ENCODE measurements at regions of chr1 and their contacts with region 1.

Region 1: DNA sequence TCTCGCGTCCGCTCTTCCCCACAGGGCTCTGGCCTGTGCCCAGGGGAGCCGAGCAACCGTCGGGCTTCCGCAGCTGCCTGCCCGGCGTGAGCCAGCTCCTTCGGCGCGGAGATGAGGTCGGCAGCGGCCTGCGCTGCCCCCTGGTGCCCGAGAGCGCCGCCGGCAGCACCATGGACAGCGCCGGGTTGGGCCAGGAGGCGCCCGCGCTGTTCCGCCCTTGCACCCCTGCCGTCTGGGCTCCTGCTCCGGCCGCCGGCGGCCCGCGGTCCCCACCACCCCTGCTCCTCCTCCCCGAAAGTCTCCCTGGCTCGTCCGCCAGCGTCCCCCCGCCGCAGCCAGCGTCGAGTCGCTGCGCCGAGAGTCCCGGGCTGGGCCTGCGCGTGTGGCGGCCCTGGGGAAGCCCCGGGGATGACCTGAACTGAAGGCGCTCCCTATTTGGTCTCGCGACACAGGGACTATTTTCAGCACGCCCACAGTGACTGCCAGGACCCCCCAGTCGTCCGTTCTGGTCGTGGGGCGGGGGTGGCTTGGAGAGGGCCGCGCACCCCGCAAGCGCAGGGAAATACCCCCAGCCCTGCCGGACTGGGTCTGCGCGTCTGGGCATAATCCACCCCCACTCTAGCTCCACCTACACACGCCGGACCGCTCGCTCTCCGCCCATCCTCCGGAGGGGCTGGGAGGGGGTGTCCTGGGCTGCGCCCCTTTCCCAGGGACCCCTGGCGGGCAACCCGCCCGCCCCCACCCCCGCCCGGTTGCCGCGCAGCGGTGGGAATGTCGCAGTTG is 1.3 kb downstream of the HES3 start:
- DNase-seq: peak; percentile 57
- ATAC-seq: peak; percentile 60
- H3K4me3 ChIP-seq: peak overlapping the region; percentile 45 to 55
- H3K27ac ChIP-seq: no peak overlapping the region
- H3K4me1 ChIP-seq: peaks cover 19 to 51% of the 10 kb centered on the region in 2 experiments; a peak in 3 of 4 replicates
- H3K27me3 ChIP-seq: no peaks in the 10 kb centered on the region
- CTCF ChIP-seq: peak; percentile 76 to 87 (median 84)
- POLR2A ChIP-seq: no peak
- RAD21 ChIP-seq: peak; percentile 96

Region 2: GRCh38 chr1:6108937-6109614 is 136.2 kb before region 1 on chr1:
- CTCF ChIA-PET with region 1: interaction called, 21 read pairs
- POLR2A ChIA-PET with region 1: no interaction called
- RAD21 ChIA-PET with region 1: interaction called in 1 of 2 experiments, 3 read pairs
- intact Hi-C with region 1: loop called (anchors 2 kb)
- DNase-seq: peak; percentile 35
- ATAC-seq: peak; percentile 93
- H3K4me3 ChIP-seq: no peak overlapping the region
- H3K27ac ChIP-seq: no peak overlapping the region
- H3K4me1 ChIP-seq: peaks cover 0 to 4% of the 10 kb centered on the region in 2 experiments; a peak in 1 of 4 replicates
- H3K27me3 ChIP-seq: no peaks in the 10 kb centered on the region
- CTCF ChIP-seq: peak; percentile 69 to 87 (median 79)
- POLR2A ChIP-seq: no peak
- RAD21 ChIP-seq: peak; percentile 97

Region 3: GRCh38 chr1:6205849-6206519 is 39.3 kb before region 1 on chr1 and contains the start of gene RNF207:
- CTCF ChIA-PET with region 1: interaction called, 29 read pairs
- POLR2A ChIA-PET with region 1: no interaction called
- RAD21 ChIA-PET with region 1: interaction called in 1 of 2 experiments, 3 read pairs
- intact Hi-C with region 1: loop called (anchors 2 kb)
- DNase-seq: peak; percentile 58
- ATAC-seq: peak; percentile 76
- H3K4me3 ChIP-seq: peak within 1 kb of the TSS; percentile 82 to 96
- H3K27ac ChIP-seq: peak within 1 kb of the TSS; percentile 99
- H3K4me1 ChIP-seq: peaks cover 7 to 27% of the 10 kb centered on the region in 2 experiments
- H3K27me3 ChIP-seq: no peaks in the 10 kb centered on the region
- CTCF ChIP-seq: no peak
- POLR2A ChIP-seq: peak; percentile 67
- RAD21 ChIP-seq: no peak
- total RNA-seq, gene RNF207: 61.2 TPM

Region 4: GRCh38 chr1:6401673-6402072 is 156.4 kb after region 1 on chr1:
- CTCF ChIA-PET with region 1: interaction called, 28 read pairs
- POLR2A ChIA-PET with region 1: no interaction called
- RAD21 ChIA-PET with region 1: interaction called, 3 to 4 read pairs
- intact Hi-C with region 1: loop called (anchors 1 kb)
- DNase-seq: no peak
- ATAC-seq: no peak
- H3K4me3 ChIP-seq: no peak overlapping the region
- H3K27ac ChIP-seq: no peak overlapping the region
- H3K4me1 ChIP-seq: peaks cover 0 to 11% of the 10 kb centered on the region in 2 experiments; a peak in 3 of 4 replicates
- H3K27me3 ChIP-seq: no peaks in the 10 kb centered on the region
- CTCF ChIP-seq: no peak
- POLR2A ChIP-seq: no peak
- RAD21 ChIP-seq: no peak

Region 5: DNA sequence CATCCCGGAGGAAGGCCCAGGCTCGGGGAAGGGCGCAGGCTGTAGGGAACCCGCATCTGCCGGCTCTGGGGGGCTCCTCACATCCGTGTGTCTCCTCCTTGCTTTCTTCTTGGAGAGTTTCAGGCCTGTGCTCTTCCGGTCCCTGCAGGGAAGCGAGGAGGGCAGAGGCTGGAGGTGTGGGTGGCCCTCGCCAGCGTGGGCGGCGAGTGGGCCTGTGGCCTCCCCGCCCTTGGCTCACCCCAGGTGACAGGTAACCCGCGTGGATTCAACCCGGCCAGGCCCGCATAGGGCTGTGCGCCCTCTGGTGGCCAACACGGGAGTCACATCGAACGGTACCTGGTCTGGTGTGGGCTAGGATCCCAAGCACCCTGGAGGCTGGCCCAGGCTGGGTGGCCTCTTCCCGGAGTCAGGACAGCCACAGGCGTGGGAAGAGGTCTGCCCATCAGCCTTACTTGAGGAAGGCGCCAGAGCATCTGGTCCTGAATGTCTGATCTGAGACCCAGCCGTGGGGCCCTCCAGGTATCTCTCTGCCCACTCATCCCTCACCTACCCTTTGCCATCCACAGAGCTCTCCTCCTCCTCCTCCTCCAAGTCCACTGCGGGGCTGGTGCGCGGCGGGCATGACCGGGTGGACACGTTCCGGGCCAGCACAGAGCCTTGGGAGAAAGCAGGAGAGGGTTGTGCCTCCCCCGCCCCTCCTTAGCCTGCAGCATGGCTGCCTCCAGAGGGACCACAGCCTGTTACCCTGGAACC is 230.3 kb after region 1 on chr1:
- CTCF ChIA-PET with region 1: interaction called, 3 read pairs
- POLR2A ChIA-PET with region 1: no interaction called
- RAD21 ChIA-PET with region 1: interaction called in 1 of 2 experiments, 3 read pairs
- intact Hi-C with region 1: loop called (anchors 2 kb)
- DNase-seq: no peak
- ATAC-seq: peak; percentile 67
- H3K4me3 ChIP-seq: no peak overlapping the region
- H3K27ac ChIP-seq: peak overlapping the region; percentile 33; the same call in 1 of the 2 replicates
- H3K4me1 ChIP-seq: peaks cover 31 to 47% of the 10 kb centered on the region in 2 experiments
- H3K27me3 ChIP-seq: no peaks in the 10 kb centered on the region
- CTCF ChIP-seq: peak; percentile 62 to 96 (median 93); a peak in 5 of 6 replicates
- POLR2A ChIP-seq: no peak
- RAD21 ChIP-seq: no peak

Measured in HCT116 (cell line).